Activated naive CD4-positive, alpha-beta T cell treated with anti-CD3 and anti-CD28 coated beads for 36 hours (primary cell): ENCODE measurements at regions of chr2 and their contacts with region 1.

Region 1: DNA sequence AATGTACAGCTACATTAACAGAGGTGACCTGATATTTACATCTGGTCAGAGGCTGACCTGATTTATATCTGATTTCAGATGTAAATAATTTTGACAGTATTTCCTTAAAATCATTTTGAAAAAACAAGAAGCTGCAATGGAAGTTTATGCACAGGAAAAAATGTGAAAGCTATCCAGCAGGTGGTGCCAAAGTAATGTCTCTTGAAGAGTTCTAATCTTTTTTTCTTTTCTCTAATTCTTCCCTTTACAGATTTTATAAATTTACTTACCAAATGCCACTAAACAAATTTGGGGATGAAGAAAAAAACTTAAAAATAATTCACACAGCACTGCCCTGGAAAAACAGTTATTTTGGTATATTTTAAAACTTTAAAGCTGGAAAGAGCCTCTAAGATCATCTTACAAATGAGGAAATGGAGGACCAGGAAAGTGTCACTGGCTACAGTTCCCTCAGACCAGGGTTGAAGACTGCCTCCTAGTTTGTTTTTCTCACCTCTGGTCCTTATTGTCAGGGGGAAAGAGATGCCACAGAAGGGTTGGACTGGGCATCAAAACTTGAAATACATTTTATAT is 16.4 kb upstream of the FBLN7 start:
- DNase-seq: peak; percentile 75
- H3K4me3 Mint-ChIP-seq: no peak overlapping the region
- H3K27ac Mint-ChIP-seq: no peak overlapping the region
- H3K4me1 Mint-ChIP-seq: peaks cover 15% of the 10 kb centered on the region
- H3K27me3 Mint-ChIP-seq: no peaks in the 10 kb centered on the region

Region 2: DNA sequence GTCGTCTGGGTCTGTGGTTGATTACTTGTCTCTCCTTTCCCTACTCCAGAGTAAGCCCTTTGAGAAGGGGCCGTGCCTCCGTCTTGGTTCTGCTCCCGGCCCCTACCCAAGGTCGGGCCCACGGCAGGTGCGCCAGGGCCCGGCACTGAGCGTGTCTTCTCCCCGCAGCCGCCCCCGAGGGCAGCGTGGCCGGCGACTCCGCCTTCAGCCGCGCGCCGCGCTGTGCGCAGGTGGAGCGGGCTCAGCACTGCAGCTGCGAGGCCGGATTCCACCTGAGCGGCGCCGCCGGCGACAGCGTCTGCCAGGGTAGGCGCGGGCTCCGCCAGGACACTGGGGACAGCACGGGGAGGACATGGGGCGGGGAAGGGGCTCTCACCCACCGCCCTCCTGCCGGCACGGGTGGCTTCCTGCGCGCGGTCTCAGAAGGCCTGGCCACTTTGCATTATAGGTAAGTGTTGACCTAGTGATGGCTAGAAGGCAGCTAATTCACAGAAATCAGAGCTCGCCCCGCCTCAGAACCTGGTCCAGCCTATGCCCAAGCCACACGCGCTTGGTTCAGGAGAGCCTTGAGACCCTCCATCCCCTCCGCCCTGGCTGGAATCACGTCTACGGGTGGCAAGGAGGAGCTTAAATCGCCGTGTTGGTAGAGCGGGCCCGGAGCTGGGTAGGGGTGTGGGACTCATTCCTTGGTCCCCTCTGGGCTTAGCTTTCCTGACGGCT is 60.0 kb after region 1 on chr2:
- CTCF ChIA-PET with region 1: interaction called, 10 read pairs
- intact Hi-C with region 1: loop called (anchors 2 kb)
- DNase-seq: peak; percentile 73
- H3K4me3 Mint-ChIP-seq: peak overlapping the region; percentile 91
- H3K27ac Mint-ChIP-seq: peak overlapping the region; percentile 99
- H3K4me1 Mint-ChIP-seq: peaks cover 70% of the 10 kb centered on the region
- H3K27me3 Mint-ChIP-seq: no peaks in the 10 kb centered on the region

Region 3: GRCh38 chr2:112242384-112242783 is 120.6 kb after region 1 on chr2:
- CTCF ChIA-PET with region 1: interaction called, 15 read pairs
- intact Hi-C with region 1: no loop called
- DNase-seq: no peak
- H3K4me3 Mint-ChIP-seq: no peak overlapping the region
- H3K27ac Mint-ChIP-seq: no peak overlapping the region
- H3K4me1 Mint-ChIP-seq: peaks cover 33% of the 10 kb centered on the region
- H3K27me3 Mint-ChIP-seq: no peaks in the 10 kb centered on the region

Region 4: DNA sequence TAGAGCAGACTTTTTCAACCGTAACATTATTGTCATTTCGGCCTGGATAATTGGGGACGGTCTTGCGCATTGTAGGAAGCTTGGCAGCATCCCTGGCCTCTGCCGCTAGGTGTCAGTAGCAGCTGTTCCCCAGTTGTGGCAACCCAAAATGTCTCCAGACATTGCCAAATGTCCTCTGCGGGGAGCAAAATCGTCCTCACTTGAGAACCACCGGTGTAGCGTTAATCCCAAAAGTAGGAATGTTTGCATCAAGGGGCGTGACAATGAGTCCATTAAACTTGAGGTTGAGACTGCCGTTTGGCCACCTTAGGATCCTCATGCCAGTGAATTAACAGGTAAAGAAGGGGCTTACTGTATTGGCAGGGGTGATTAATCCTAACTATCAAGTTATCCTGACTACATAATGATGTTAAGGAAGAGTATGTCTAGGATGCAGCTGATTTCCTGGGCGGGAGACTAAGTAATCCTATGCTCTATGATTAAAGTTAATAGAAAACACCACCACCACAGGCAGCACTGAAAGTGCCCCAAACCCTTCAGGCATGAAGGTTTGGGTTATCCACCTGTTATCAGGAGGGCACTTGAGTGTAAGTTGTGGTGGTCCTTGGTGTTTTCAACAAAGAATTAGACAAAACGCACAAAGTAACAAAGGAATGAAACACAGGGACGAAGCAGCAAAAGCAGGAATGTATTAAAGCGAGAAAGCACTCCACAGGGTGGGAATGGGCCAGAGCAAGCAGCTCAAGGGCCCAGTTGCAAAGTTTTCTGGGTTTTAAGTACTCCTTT is 137.9 kb after region 1 on chr2:
- CTCF ChIA-PET with region 1: interaction called, 10 read pairs
- intact Hi-C with region 1: loop called (anchors 1 kb)
- DNase-seq: peak; percentile 95
- H3K4me3 Mint-ChIP-seq: peak overlapping the region; percentile 54
- H3K27ac Mint-ChIP-seq: no peak overlapping the region
- H3K4me1 Mint-ChIP-seq: peaks cover 9% of the 10 kb centered on the region
- H3K27me3 Mint-ChIP-seq: no peaks in the 10 kb centered on the region

Region 5: DNA sequence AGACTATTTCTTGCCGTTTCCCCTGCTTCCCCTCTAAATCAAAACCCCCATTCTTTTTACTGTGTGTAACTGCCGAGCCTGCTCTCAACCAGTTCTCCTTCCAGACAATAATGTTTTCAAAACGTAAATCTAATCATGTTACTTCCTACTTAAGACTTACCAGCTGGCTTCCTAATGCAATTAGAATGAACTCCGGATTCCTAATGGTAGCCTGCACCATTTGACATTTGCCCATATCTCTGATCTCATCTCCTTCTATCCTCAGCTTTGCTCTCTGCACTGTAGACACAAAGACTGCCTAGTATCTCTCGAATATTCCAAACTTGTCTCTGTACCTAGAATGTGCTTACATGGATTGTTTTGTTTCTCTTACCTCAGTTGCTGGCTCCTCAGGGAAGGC is 373.1 kb after region 1 on chr2:
- CTCF ChIA-PET with region 1: no interaction called
- intact Hi-C with region 1: loop called (anchors 5 kb)
- DNase-seq: no peak
- H3K4me3 Mint-ChIP-seq: no peak overlapping the region
- H3K27ac Mint-ChIP-seq: no peak overlapping the region
- H3K4me1 Mint-ChIP-seq: no peaks in the 10 kb centered on the region
- H3K27me3 Mint-ChIP-seq: no peaks in the 10 kb centered on the region